GM13977 (cell line): ENCODE measurements at regions of chr19 and their contacts with region 1.

Region 1: DNA sequence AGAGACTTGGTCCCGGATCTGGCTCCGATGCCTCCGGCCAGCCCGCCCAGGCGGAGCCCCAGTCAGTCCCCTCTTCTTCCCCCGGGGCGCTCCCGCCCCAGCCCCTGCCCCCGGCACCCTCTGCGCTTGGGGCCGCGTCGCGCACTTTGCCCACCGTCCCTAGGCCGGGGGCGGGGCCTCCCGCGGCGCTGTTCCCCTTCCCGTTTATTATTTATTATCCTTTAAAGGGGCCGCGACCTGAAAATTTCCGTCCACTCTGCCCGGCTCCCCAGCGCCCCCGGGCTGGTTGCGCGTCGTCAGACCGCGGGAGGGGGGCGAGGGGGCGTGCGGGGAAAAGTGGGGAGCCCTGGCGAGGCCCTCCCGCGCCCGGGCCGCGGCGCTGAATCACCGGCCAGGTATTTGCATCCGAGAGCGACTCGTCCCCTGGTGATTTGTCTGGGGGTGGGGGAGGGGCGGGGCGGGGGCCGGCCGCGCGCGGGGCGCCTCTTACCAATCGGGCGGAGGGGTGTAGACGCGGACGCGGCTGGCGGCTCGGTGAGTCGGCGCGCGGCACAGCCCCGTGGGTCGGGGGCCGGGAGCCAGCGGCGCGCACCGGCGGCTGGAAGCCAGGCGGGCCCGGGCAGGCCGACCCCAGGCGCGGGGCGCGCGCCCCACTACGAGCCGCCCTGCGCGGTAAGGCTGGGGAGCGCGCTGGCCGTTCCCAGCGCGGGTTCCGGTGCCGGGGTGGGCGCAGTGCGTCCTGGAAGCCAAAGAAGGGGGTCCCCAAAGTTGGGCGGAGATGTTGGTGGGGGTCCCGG is at the start of gene ARID3A:
- DNase-seq: peak; percentile 95
- CTCF ChIP-seq: no peak

Region 2: DNA sequence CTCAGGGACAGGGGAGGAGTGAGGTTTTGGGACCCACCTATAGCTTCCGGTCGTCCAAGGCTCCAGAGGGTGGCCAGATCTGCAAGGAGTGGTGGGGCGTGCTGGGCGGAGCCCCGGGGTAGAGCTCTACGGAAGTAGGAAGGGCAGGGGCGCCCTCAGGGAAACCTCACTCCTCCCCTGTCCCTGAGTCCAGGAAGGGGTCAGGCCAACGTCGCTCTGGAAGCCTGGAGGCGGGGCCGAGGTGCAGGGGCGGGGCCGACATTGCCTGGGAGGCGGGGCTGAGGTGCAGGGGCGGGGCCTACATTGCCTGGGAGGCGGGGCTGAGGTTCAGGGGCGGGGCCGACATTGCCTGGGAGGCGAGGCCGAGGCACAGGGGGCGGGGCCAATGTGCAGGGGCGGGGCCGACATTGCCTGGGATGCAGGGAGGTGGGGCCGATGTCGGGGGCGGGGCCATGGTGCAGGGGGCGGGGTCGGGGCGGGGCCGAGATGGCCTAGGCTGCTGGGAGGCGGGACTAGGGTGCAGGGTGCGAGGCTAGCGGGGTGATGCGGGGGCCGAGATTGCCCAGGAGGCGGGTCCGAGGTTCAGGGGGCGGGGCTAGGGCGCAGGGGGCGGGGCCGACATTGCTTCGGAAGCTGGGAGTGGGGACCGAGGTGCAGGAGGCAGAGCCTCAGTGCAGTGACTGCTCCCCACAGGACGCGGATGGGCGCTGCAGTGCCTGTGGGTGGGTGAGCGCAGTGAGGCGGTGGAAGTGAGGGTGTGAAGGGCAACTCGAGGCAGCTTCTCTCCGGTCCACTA is 221.9 kb before region 1 on chr19:
- in situ Hi-C with region 1: no loop called
- DNase-seq: peak; percentile 84
- CTCF ChIP-seq: no peak

Region 3: DNA sequence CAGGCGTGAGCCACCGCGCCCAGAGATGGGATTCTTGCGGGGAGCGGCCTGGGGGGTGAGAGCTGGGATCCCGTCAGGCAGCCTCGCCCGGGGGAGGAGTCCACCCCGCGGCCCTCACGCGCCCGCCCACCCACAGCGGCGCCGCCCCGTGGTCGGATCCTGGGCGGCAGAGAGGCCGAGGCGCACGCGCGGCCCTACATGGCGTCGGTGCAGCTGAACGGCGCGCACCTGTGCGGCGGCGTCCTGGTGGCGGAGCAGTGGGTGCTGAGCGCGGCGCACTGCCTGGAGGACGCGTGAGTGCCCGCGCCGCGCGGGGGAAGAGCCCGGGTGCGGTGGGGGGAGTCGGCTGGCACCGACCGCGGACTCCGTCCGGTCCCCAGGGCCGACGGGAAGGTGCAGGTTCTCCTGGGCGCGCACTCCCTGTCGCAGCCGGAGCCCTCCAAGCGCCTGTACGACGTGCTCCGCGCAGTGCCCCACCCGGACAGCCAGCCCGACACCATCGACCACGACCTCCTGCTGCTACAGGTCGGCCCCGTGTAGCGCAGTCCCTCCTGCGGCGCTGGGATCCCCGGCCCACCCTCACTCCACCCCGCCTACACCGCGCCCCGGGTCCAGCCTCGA is 65.1 kb before region 1 on chr19:
- in situ Hi-C with region 1: loop called (anchors 10 kb)
- DNase-seq: peak; percentile 85
- CTCF ChIP-seq: peak; percentile 35

Region 4: DNA sequence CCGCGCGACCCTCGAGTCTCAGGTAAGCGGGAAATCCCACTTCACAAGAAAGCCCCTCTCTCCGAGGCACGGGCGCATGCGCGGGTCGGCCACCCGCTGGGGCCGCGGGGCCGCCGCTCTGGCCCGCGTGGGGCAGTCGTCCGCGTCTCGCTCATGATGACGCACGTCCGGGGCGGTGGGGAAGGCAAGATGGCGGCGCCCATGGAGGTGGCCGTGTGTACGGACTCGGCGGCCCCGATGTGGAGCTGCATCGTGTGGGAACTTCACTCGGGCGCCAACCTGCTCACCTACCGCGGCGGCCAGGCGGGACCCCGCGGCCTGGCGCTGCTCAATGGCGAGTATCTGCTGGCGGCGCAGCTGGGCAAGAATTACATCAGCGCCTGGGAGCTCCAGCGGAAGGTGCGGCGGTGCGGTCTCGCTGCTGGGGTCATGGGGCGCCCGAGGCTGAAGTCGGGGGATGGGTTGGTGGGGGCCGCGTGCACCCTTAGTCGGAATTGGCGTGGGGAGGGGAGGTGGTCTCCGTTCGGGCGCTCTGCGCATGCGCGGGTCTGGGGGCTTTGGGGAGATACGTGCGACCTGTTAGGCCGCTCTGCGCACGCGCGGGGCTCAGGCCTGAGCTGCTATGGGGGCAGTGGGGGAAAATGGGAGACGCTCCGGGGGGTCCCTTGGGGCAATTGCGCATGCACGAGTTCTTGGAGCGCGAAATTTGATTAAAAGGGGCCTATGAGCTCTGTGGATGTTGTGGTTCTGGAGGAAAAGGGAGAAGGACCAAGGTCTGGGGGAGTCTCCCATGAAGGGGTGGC is 58.6 kb after region 1 on chr19 and contains the start of gene WDR18:
- in situ Hi-C with region 1: loop called (anchors 5 kb)
- DNase-seq: peak; percentile 100
- CTCF ChIP-seq: peak; percentile 12